Activated CD4-positive, alpha-beta T cell treated with anti-CD3 and anti-CD28 coated beads, Interleukin-2, amount 10 ng/mL, durations not matched to agents 24 days and 14 days (primary cell): ENCODE measurements at regions of chr20 and their contacts with region 1.

Region 1: DNA sequence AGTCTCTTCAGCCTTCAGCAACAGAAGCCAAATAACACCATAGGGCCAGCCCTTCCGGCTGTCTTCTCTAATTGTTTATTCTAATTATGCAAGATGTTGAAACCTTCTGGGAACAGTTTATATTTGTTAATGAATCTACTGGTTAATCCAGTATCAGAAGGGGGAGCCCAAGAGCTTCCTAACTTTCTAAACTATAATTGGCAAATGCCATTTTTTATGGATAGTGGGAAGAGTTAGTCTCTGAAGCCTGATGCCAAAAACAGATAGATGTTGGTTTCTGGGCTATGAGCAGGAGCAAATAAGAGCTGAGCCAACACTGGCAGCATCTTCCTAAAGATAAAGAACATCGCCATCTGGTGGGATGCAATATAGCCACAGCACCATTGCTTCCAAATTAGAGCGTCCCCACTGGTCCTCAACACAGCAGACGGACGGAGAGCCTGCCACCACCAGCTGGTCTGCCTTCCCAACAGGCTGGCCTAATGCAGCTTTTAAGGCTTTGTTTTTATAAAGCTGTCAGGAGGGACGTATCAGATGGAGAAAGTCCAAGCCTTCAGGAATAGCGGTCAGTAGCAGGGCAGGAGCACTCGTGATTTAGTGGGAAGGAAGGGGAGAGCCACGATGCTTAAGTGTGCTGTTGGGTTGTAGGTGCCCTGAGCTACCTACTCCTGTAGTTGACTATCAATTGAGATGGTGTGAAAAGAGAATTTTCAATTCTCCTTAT is 118.8 kb downstream of the RALGAPA2 start:
- DNase-seq: peak; percentile 66
- H3K4me3 Mint-ChIP-seq: no peak overlapping the region
- H3K27ac Mint-ChIP-seq: no peak overlapping the region
- H3K4me1 Mint-ChIP-seq: no peaks in the 10 kb centered on the region
- H3K27me3 Mint-ChIP-seq: no peaks in the 10 kb centered on the region

Region 2: DNA sequence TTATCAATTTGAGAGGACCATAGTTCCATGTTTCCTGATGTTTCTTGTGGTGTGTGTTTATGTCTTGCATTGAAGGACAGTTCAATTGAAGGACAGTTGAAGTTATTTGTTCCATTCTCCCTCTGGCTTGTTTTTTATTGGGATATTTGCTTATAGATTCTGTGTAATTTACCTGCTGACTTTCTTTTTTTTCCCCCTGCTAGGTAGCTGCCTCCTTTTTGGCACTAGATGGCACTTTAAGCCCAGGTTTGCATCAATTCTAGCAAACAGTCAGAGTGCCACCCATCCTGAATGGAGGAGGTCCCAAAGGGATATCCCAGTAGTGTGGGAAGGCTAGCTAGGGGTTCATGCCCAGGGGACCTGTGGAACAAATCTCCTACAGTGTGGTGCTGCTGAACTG is 463.2 kb before region 1 on chr20:
- intact Hi-C with region 1: loop called (anchors 5 kb)
- DNase-seq: no peak
- H3K4me3 Mint-ChIP-seq: no peak overlapping the region
- H3K27ac Mint-ChIP-seq: no peak overlapping the region
- H3K4me1 Mint-ChIP-seq: no peaks in the 10 kb centered on the region
- H3K27me3 Mint-ChIP-seq: peaks cover 6% of the 10 kb centered on the region

Region 3: GRCh38 chr20:20637998-20638725 is 44.6 kb after region 1 on chr20:
- intact Hi-C with region 1: no loop called
- DNase-seq: peak; percentile 34
- H3K4me3 Mint-ChIP-seq: no peak overlapping the region
- H3K27ac Mint-ChIP-seq: no peak overlapping the region
- H3K4me1 Mint-ChIP-seq: peaks cover 2% of the 10 kb centered on the region
- H3K27me3 Mint-ChIP-seq: no peaks in the 10 kb centered on the region